GM12878 (cell line): ENCODE measurements at regions of chr1 and their contacts with region 1.

Region 1: GRCh38 chr1:206982216-206982615 is 12.0 kb upstream of the FCAMR start:
- DNase-seq: no peak
- ATAC-seq: peak; percentile 98
- H3K4me3 ChIP-seq: no peak overlapping the region
- H3K27ac ChIP-seq: no peak overlapping the region
- H3K4me1 ChIP-seq: no peaks in the 10 kb centered on the region
- H3K27me3 ChIP-seq: no peaks in the 10 kb centered on the region; a peak in 1 of 4 replicates
- CTCF ChIP-seq: peak; percentile 85 to 94 (median 92)
- EP300 ChIP-seq: no peak
- POLR2A ChIP-seq: no peak
- RAD21 ChIP-seq: peak; percentile 97

Region 2: GRCh38 chr1:206415942-206416341 is 566.3 kb before region 1 on chr1:
- CTCF ChIA-PET with region 1: no interaction called
- POLR2A ChIA-PET with region 1: no interaction called
- RAD21 ChIA-PET with region 1: no interaction called
- SMC1A ChIA-PET with region 1: no interaction called
- in situ Hi-C with region 1: no loop called
- intact Hi-C with region 1: no loop called
- DNase-seq: no peak
- ATAC-seq: no peak
- H3K4me3 ChIP-seq: no peak overlapping the region
- H3K27ac ChIP-seq: no peak overlapping the region
- H3K4me1 ChIP-seq: no peaks in the 10 kb centered on the region
- H3K27me3 ChIP-seq: no peaks in the 10 kb centered on the region
- CTCF ChIP-seq: no peak
- EP300 ChIP-seq: no peak
- POLR2A ChIP-seq: no peak
- RAD21 ChIP-seq: no peak

Region 3: GRCh38 chr1:206606856-206607255 is 375.4 kb before region 1 on chr1:
- CTCF ChIA-PET with region 1: interaction called, 8 read pairs
- POLR2A ChIA-PET with region 1: no interaction called
- RAD21 ChIA-PET with region 1: interaction called, 4 read pairs
- SMC1A ChIA-PET with region 1: interaction called, 3 read pairs
- in situ Hi-C with region 1: no loop called
- intact Hi-C with region 1: loop called (anchors 1 kb)
- DNase-seq: no peak
- ATAC-seq: peak; percentile 49
- H3K4me3 ChIP-seq: no peak overlapping the region
- H3K27ac ChIP-seq: no peak overlapping the region
- H3K4me1 ChIP-seq: peaks cover 31% of the 10 kb centered on the region
- H3K27me3 ChIP-seq: no peaks in the 10 kb centered on the region
- CTCF ChIP-seq: peak; percentile 43 to 63 (median 57); a peak in 5 of 6 replicates
- EP300 ChIP-seq: no peak
- POLR2A ChIP-seq: no peak
- RAD21 ChIP-seq: no peak

Region 4: GRCh38 chr1:206725109-206725963 is 256.9 kb before region 1 on chr1:
- CTCF ChIA-PET with region 1: interaction called, 42 read pairs
- POLR2A ChIA-PET with region 1: no interaction called
- RAD21 ChIA-PET with region 1: interaction called, 13 read pairs
- SMC1A ChIA-PET with region 1: interaction called, 6 read pairs
- in situ Hi-C with region 1: loop called (anchors 5 kb)
- intact Hi-C with region 1: no loop called
- DNase-seq: no peak
- ATAC-seq: peak; percentile 84
- H3K4me3 ChIP-seq: no peak overlapping the region
- H3K27ac ChIP-seq: 0 out of 2 replicates have a peak overlapping the region, but pooled peaks have one; percentile 34
- H3K4me1 ChIP-seq: peaks cover 29% of the 10 kb centered on the region
- H3K27me3 ChIP-seq: no peaks in the 10 kb centered on the region
- CTCF ChIP-seq: peak; percentile 59 to 78 (median 73)
- EP300 ChIP-seq: no peak
- POLR2A ChIP-seq: no peak
- RAD21 ChIP-seq: peak; percentile 53

Region 5: DNA sequence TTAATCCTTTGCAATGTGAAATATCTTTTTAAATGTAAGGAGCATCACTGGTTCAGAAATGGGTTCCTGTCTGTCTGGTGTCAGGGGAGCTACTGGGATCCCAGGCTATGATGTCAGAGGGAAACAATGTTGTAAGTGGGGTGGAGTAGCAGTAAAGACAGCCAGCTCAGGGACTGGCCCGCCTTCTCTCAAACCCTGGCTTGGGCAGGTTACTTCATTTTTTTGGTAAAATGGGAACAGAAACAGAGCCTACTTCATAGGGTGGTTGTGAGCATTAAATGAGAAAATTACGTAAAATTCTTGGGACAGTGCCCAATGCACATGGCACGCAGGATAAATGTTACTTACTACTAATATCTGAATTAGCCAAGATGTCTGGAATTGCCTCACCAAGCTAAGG is 147.5 kb before region 1 on chr1:
- CTCF ChIA-PET with region 1: interaction called, 20 read pairs
- POLR2A ChIA-PET with region 1: no interaction called
- RAD21 ChIA-PET with region 1: interaction called, 6 read pairs
- SMC1A ChIA-PET with region 1: interaction called, 6 read pairs
- in situ Hi-C with region 1: no loop called
- intact Hi-C with region 1: no loop called
- DNase-seq: no peak
- ATAC-seq: peak; percentile 41; the same call in 2 of the 3 replicates
- H3K4me3 ChIP-seq: no peak overlapping the region
- H3K27ac ChIP-seq: no peak overlapping the region
- H3K4me1 ChIP-seq: peaks cover 32% of the 10 kb centered on the region
- H3K27me3 ChIP-seq: no peaks in the 10 kb centered on the region; a peak in 1 of 4 replicates
- CTCF ChIP-seq: no peak
- EP300 ChIP-seq: no peak
- POLR2A ChIP-seq: no peak
- RAD21 ChIP-seq: no peak

Region 6: GRCh38 chr1:206905280-206906164 is 76.7 kb before region 1 on chr1:
- CTCF ChIA-PET with region 1: interaction called, 59 read pairs
- POLR2A ChIA-PET with region 1: no interaction called
- RAD21 ChIA-PET with region 1: interaction called, 12 read pairs
- SMC1A ChIA-PET with region 1: interaction called, 9 read pairs
- in situ Hi-C with region 1: no loop called
- intact Hi-C with region 1: no loop called
- DNase-seq: no peak
- ATAC-seq: peak; percentile 80
- H3K4me3 ChIP-seq: no peak overlapping the region
- H3K27ac ChIP-seq: no peak overlapping the region
- H3K4me1 ChIP-seq: peaks cover 3% of the 10 kb centered on the region; the same call in 1 of the 2 replicates
- H3K27me3 ChIP-seq: no peaks in the 10 kb centered on the region
- CTCF ChIP-seq: no peak
- EP300 ChIP-seq: no peak
- POLR2A ChIP-seq: no peak
- RAD21 ChIP-seq: no peak

Region 7: DNA sequence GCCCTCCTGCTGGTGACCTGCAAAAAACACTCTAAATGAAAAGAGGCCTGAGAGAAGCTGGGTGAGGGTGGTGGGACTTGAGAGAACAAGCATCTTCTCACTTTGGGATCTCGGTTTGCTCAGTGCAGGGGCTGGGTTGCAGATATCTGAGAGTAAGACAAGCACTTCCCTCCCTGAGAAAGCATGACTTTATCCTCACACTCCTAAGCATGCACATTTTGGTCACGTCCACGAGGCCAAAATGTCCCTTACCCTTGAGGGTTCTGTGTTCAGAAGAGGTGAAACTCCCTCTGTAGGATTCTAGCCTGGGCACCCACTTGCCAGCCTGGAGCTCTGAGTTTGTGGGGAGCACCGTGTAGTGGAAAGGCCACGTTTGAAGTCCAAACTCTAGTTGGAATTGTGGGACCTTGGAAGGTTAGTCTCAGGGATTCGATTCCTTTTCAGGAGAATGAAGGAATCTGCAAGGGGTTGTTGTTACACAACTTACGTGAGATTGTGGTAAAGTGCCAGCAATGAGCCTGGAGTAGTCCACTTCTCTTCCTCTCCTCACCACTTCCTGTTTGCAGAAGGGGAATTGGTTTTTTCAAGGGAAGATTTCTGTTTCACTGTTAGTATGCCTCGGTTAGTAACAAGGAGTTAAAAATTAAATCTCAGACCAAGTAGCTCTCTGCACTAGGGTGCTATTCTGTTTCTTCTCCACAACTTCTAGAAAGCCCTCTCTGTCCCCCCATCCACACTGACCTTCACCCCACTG is 14.9 kb before region 1 on chr1:
- CTCF ChIA-PET with region 1: interaction called, 136 read pairs
- POLR2A ChIA-PET with region 1: interaction called, 3 read pairs
- RAD21 ChIA-PET with region 1: interaction called, 36 read pairs
- SMC1A ChIA-PET with region 1: interaction called, 68 read pairs
- in situ Hi-C with region 1: no loop called
- intact Hi-C with region 1: no loop called
- DNase-seq: peak; percentile 72
- ATAC-seq: peak; percentile 72
- H3K4me3 ChIP-seq: 0 out of 2 replicates have a peak overlapping the region, but pooled peaks have one; percentile 37
- H3K27ac ChIP-seq: peak overlapping the region; percentile 52
- H3K4me1 ChIP-seq: peaks cover 38% of the 10 kb centered on the region
- H3K27me3 ChIP-seq: no peaks in the 10 kb centered on the region
- CTCF ChIP-seq: no peak
- EP300 ChIP-seq: 0 out of 4 replicates have a peak, but pooled peaks of 1 of the 2 experiments have one; percentile 32
- POLR2A ChIP-seq: no peak
- RAD21 ChIP-seq: no peak